ENCODE measurements at regions of chr1 and their contacts with region 1.

Region 1: GRCh38 chr1:168603501-168604110 is 27.2 kb downstream of the XCL1 start:
- DNase-seq: peak; percentile 81
- ATAC-seq: peak; percentile 95
- H3K4me3 Mint-ChIP-seq: no peak overlapping the region
- H3K27ac Mint-ChIP-seq: no peak overlapping the region
- H3K4me1 Mint-ChIP-seq: peaks cover 13% of the 10 kb centered on the region
- H3K27me3 Mint-ChIP-seq: peaks cover 6% of the 10 kb centered on the region

Region 2: GRCh38 chr1:168535536-168535935 is 68.1 kb before region 1 on chr1:
- CTCF ChIA-PET with region 1: interaction called, 13 read pairs
- POLR2A ChIA-PET with region 1: no interaction called
- DNase-seq: peak; percentile 75
- ATAC-seq: peak; percentile 89
- H3K4me3 Mint-ChIP-seq: peak overlapping the region; percentile 61
- H3K27ac Mint-ChIP-seq: peak overlapping the region; percentile 92
- H3K4me1 Mint-ChIP-seq: peaks cover 89% of the 10 kb centered on the region
- H3K27me3 Mint-ChIP-seq: no peaks in the 10 kb centered on the region

Region 3: GRCh38 chr1:168591066-168591465 is 12.5 kb before region 1 on chr1:
- CTCF ChIA-PET with region 1: interaction called, 17 read pairs
- POLR2A ChIA-PET with region 1: no interaction called
- DNase-seq: no peak
- ATAC-seq: no peak
- H3K4me3 Mint-ChIP-seq: no peak overlapping the region
- H3K27ac Mint-ChIP-seq: no peak overlapping the region
- H3K4me1 Mint-ChIP-seq: no peaks in the 10 kb centered on the region
- H3K27me3 Mint-ChIP-seq: no peaks in the 10 kb centered on the region

Region 4: DNA sequence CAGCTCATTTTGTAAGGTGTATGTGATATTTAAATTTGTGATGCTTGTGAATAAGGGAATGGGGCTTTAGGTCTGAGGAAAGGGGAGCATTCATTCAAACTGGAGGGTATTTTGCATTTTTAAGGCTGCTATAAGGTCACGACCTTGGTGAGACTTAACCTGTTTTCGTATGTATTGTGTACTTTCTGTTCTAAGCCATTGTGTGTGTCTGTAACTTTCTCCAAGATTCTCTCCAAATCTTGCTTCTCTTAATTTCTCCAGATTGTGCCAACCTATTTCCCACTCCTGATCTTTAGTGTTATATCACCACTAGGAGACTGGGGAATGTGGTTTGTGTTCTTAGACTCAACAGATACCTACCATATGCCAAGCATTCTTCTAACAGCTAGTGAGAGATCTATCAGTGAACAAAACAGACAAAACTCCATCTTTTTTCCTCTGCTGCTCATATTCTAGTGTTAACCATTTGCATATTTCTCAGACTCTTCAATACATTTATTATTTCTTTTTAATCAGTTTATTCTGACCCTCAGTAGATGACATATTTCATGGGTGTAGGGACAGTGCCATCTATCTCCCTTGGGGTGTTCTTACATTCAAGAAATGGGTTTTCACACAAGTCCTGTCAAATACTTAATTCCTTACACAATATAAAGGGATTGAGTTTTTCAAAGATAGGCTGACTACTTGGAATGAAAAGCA is 530.3 kb after region 1 on chr1:
- CTCF ChIA-PET with region 1: interaction called, 13 read pairs
- POLR2A ChIA-PET with region 1: no interaction called
- DNase-seq: no peak
- ATAC-seq: no peak
- H3K4me3 Mint-ChIP-seq: no peak overlapping the region
- H3K27ac Mint-ChIP-seq: no peak overlapping the region
- H3K4me1 Mint-ChIP-seq: peaks cover 3% of the 10 kb centered on the region
- H3K27me3 Mint-ChIP-seq: no peaks in the 10 kb centered on the region

Region 5: GRCh38 chr1:169348383-169349036 is 744.9 kb after region 1 on chr1:
- CTCF ChIA-PET with region 1: interaction called, 88 read pairs
- POLR2A ChIA-PET with region 1: interaction called, 5 read pairs
- DNase-seq: peak; percentile 46
- ATAC-seq: no peak
- H3K4me3 Mint-ChIP-seq: no peak overlapping the region
- H3K27ac Mint-ChIP-seq: no peak overlapping the region
- H3K4me1 Mint-ChIP-seq: peaks cover 18% of the 10 kb centered on the region
- H3K27me3 Mint-ChIP-seq: no peaks in the 10 kb centered on the region